Left lung (tissue), 14 donors: ENCODE measurements at regions of chr19 and their contacts with region 1.

Region 1: DNA sequence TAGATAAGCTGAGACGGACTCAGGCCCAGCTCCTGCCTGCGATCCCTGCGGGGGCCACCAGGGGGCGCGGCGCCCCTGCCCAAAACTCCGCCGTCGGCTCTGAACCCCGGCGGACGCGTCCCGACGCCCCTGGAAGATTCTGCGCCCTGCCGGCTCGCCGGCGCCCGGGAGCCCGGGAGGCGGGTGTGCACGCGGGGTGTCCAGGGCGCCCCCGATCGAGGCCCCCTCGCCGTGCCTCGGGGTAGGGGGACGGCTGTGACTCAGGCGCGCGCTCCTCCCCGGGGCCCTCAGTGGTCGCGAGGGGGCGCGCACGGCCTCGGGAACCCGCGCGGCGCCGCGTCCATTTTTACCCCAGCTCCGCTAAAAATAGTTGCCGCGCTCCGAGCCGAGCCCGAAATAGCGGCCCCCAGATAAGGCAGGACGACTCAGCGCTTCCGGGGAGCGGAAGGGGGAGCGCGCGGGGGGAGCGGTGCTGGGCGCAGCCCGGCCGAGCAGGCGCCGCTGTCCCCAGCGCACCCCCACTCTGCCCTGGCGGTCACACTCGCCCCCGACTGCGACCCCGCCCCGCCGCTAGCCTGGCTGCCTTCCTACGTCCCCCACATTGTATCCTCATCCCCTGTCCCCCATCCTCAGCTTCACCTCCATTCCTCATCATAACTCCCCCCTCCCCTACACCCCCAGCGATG is 16.0 kb upstream of the ERCC1 start:
- DNase-seq: peak; percentile 82 to 95 (median 88)
- ATAC-seq: peak; percentile 68
- H3K4me3 ChIP-seq: peak overlapping the region; percentile 51 to 62
- H3K27ac ChIP-seq: peak overlapping the region; percentile 92 to 93
- H3K4me1 ChIP-seq: peaks cover 9 to 45% of the 10 kb centered on the region in 2 donors
- H3K27me3 ChIP-seq: no peaks in the 10 kb centered on the region
- CTCF ChIP-seq: peak; percentile 98 to 100

Region 2: GRCh38 chr19:45215383-45216191 is 224.1 kb before region 1 on chr19:
- intact Hi-C with region 1: no loop called
- DNase-seq: peak in 2 of 4 donors; percentile 29 to 75
- ATAC-seq: peak; percentile 9
- H3K4me3 ChIP-seq: no peak overlapping the region
- H3K27ac ChIP-seq: peak overlapping the region in 1 of 2 donors; percentile 23
- H3K4me1 ChIP-seq: peaks cover 7 to 10% of the 10 kb centered on the region in 2 donors
- H3K27me3 ChIP-seq: peaks cover 37 to 66% of the 10 kb centered on the region in 2 donors
- CTCF ChIP-seq: no peak

Region 3: GRCh38 chr19:45478454-45479238 is 38.9 kb after region 1 on chr19:
- intact Hi-C with region 1: loop called (anchors 5 kb)
- DNase-seq: peak; percentile 84 to 91 (median 89)
- ATAC-seq: peak; percentile 93
- H3K4me3 ChIP-seq: peak overlapping the region; percentile 33 to 34
- H3K27ac ChIP-seq: peak overlapping the region; percentile 94 to 96
- H3K4me1 ChIP-seq: peaks cover 0 to 19% of the 10 kb centered on the region in 2 donors
- H3K27me3 ChIP-seq: peaks cover 0 to 32% of the 10 kb centered on the region in 2 donors
- CTCF ChIP-seq: peak; percentile 95 to 96

Region 4: GRCh38 chr19:45484273-45484945 is 44.7 kb after region 1 on chr19:
- intact Hi-C with region 1: loop called (anchors 5 kb)
- DNase-seq: peak in 1 of 4 donors; percentile 5
- ATAC-seq: no peak
- H3K4me3 ChIP-seq: no peak overlapping the region
- H3K27ac ChIP-seq: no peak overlapping the region
- H3K4me1 ChIP-seq: peaks cover 0 to 10% of the 10 kb centered on the region in 2 donors
- H3K27me3 ChIP-seq: no peaks in the 10 kb centered on the region
- CTCF ChIP-seq: no peak